K562 (cell line): ENCODE measurements at regions of chr10 and their contacts with region 1.

Region 1: DNA sequence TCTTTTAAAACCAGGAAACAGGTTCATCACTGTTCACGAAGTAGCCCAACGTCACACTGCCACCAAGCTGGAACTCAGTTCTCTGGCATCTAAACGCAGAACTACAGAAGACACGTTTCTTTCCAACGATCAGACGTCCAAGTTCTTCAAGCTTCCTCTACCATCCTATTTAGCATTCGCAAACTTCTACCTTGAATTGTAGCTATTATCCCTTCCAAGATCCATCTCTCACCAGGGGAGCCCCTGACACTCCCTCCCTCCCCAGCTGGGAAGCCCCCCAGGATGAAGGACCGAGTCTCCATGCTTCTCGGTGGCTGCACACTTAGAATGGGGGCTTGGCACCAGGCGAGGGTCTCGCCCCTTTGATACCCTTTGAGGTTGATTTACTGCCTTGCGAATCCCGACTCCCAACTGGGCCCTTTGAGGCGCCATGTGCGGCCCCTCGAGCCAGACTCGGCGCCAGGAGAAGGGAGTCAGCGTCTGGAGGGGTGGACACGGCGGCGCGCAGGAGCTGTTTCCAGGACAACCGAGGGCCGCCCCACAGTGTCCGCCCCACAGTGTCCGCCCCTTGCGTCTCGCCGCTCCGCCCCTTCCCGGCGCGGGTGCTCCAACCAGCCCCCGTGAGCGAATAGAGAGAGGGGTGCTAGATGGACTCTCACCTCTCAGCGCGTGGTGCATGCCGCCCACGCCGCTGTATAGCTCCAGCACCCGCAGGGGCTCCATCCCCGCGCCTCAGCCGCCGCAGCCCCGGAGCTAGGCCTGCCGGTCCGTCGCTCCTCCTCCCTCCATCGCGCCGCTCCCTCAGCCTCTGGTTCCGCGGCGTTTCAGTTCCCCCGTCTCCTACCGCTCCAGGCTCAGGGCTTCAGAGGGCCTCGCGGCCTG is at the start of gene TRDMT1:
- DNase-seq: peak; percentile 86 to 94 (median 88)
- ATAC-seq: peak; percentile 97
- H3K4me3 ChIP-seq: peak within 1 kb of the TSS; percentile 67
- H3K27ac ChIP-seq: peak within 1 kb of the TSS; percentile 89
- H3K4me1 ChIP-seq: peaks cover 14 to 52% of the 10 kb centered on the region in 2 experiments
- H3K27me3 ChIP-seq: no peaks in the 10 kb centered on the region
- CTCF ChIP-seq: peak in 2 of 3 experiments; percentile 1 to 35; a peak in 2 of 6 replicates
- EP300 ChIP-seq: peak; percentile 3; the same call in 1 of the 2 replicates
- POLR2A ChIP-seq: peak; percentile 83
- RAD21 ChIP-seq: peak; percentile 17 to 53; a peak in 3 of 4 replicates
- polyA plus RNA-seq, gene TRDMT1: 8.7 to 9.3 TPM

Region 2: GRCh38 chr10:17216217-17216900 is 15.2 kb after region 1 on chr10:
- CTCF ChIA-PET with region 1: no interaction called
- POLR2A ChIA-PET with region 1: interaction called, 17 read pairs
- in situ Hi-C with region 1: no loop called
- intact Hi-C with region 1: no loop called
- DNase-seq: peak; percentile 32 to 87 (median 60)
- ATAC-seq: peak; percentile 89
- H3K4me3 ChIP-seq: no peak overlapping the region
- H3K27ac ChIP-seq: peak overlapping the region; percentile 88
- H3K4me1 ChIP-seq: peaks cover 5 to 44% of the 10 kb centered on the region in 2 experiments
- H3K27me3 ChIP-seq: no peaks in the 10 kb centered on the region
- CTCF ChIP-seq: peak in 1 of 3 experiments; percentile 7; a peak in 1 of 6 replicates
- EP300 ChIP-seq: peak; percentile 95
- POLR2A ChIP-seq: peak; percentile 49; the same call in 1 of the 2 replicates
- RAD21 ChIP-seq: no peak